PC-9 (cell line): ENCODE measurements at regions of chr11 and their contacts with region 1.

Region 1: DNA sequence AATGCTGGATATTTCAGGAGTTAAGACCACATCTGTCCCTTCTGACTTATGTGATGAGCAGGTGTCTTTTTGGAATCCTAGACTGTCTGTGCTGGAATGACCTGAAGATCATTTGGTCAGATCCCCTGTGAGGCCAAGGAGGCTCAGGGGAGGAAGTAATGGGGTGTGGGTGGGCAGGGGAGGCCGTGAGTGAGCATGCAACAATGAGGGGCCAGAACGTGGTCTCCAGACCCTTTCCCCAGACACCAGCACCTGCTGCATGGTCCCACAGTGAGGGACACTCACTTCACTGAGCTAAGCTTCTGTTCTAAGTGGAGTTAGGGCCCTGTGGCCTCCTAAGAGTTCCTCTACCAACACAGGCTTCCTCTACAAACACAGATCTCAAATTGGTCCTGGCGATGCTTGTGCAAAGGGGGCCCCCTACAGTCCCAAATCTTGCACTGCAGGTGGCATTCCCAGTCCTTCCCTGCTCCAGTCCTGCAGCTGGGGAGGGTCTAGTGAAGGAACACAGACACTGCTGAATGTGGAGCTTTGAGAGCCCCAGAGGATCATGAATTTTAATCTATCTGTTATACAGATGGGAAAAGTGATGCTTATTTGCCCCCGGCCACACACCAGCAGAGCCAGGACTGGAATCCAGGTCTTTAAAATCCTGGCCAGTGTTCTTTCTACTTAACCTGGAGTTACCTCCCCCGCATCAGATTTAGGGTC is 7.4 kb downstream of the USP2 start:
- DNase-seq: peak; percentile 55 to 76
- H3K4me3 ChIP-seq: no peak overlapping the region
- H3K27ac ChIP-seq: no peak overlapping the region
- H3K4me1 ChIP-seq: peaks cover 28% of the 10 kb centered on the region
- H3K27me3 ChIP-seq: no peaks in the 10 kb centered on the region
- CTCF ChIP-seq: peak; percentile 99

Region 2: DNA sequence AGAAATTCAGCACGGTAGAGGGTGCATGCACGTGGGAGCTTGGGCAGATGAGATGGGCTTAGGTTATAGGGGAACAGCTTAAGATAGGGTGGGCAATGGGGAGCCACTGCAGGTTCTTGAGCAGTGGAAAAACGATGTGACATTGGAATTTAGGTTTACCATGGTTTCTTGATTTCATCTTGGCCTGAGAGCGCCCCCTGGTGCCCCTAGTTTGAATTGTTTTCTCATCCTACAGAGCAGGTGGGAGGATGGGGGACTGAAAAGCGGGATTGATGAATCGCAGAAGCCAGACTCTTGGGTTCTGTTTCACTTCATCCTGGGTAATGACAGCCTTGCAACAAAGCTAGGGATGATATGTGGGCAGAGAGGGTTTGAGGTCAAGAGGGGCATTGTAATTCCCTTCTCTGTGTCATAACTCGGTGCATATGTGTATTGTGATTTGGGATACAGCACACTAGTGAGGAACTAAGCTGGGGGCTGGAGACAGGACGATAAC is 50.5 kb before region 1 on chr11:
- CTCF ChIA-PET with region 1: interaction called, 3 read pairs
- POLR2A ChIA-PET with region 1: no interaction called
- intact Hi-C with region 1: loop called (anchors 1 kb)
- DNase-seq: peak; percentile 59 to 71
- H3K4me3 ChIP-seq: no peak overlapping the region
- H3K27ac ChIP-seq: no peak overlapping the region
- H3K4me1 ChIP-seq: peaks cover 22% of the 10 kb centered on the region
- H3K27me3 ChIP-seq: no peaks in the 10 kb centered on the region
- CTCF ChIP-seq: peak; percentile 96

Region 3: DNA sequence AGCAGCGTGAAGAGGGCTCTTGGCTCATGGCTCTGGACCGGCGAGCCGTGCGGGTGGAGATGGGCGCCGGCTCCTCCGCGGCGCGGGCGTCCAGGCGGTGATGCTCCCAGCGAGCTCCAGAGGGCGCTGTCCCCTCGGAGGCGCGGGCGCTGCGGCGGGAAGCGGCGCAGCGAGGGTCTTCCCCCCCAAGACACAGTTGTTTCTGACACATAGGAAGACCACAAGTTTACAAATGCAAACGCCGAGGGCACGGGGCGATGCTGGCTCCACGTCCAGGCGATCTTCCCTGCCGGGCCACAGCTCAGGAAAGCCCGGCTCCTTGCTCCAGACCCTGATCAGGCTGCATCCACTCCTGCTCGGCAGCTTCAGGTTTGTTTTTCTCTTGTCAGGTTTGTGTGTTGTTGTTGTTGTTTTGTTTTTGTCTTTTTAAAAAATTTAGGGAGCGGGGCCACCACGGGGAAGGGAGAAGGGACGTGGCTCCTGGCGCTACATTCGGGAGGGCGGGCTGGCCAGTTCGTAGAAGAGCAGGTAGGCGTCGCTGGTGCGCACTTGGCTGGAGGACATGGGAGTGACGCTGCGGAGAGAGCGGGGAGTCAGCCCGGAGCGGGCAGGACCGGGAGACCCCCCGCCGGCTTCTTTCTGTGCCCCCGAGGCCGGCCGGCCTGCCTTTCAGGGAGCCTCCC is 17.6 kb before region 1 on chr11:
- CTCF ChIA-PET with region 1: interaction called, 8 read pairs
- POLR2A ChIA-PET with region 1: no interaction called
- intact Hi-C with region 1: loop called (anchors 1 kb)
- DNase-seq: peak; percentile 61 to 65
- H3K4me3 ChIP-seq: peak overlapping the region; percentile 71
- H3K27ac ChIP-seq: no peak overlapping the region
- H3K4me1 ChIP-seq: peaks cover 20% of the 10 kb centered on the region
- H3K27me3 ChIP-seq: no peaks in the 10 kb centered on the region
- CTCF ChIP-seq: peak; percentile 100

Region 4: GRCh38 chr11:119417726-119418540 is 43.9 kb after region 1 on chr11:
- CTCF ChIA-PET with region 1: no interaction called
- POLR2A ChIA-PET with region 1: no interaction called
- intact Hi-C with region 1: no loop called
- DNase-seq: peak in 1 of 2 experiments; percentile 48
- H3K4me3 ChIP-seq: no peak overlapping the region
- H3K27ac ChIP-seq: no peak overlapping the region
- H3K4me1 ChIP-seq: 0 out of 2 replicates have a peak, but pooled peaks cover 3% of the 10 kb centered on the region
- H3K27me3 ChIP-seq: no peaks in the 10 kb centered on the region
- CTCF ChIP-seq: no peak